ENCODE measurements at regions of chr1 and their contacts with region 1.

Region 1: GRCh38 chr1:241531195-241532161 is 700 bp upstream of the KMO start:
- DNase-seq: peak; percentile 66
- ATAC-seq: peak; percentile 89
- H3K4me3 ChIP-seq: peak overlapping the region; percentile 67
- H3K27ac ChIP-seq: peak overlapping the region; percentile 89
- H3K4me1 ChIP-seq: peaks cover 8% of the 10 kb centered on the region; the same call in 1 of the 2 replicates
- H3K27me3 ChIP-seq: no peaks in the 10 kb centered on the region
- CTCF ChIP-seq: peak; percentile 16 to 64 (median 53); a peak in 4 of 6 replicates
- EP300 ChIP-seq: peak; percentile 4 to 38; a peak in 2 of 4 replicates
- POLR2A ChIP-seq: no peak
- RAD21 ChIP-seq: peak; percentile 77

Region 2: GRCh38 chr1:241519308-241520079 is 12.0 kb before region 1 on chr1 and contains the start of gene FH:
- CTCF ChIA-PET with region 1: no interaction called
- POLR2A ChIA-PET with region 1: no interaction called
- RAD21 ChIA-PET with region 1: interaction called, 3 read pairs
- SMC1A ChIA-PET with region 1: interaction called, 7 read pairs
- in situ Hi-C with region 1: no loop called
- intact Hi-C with region 1: loop called (anchors 1 kb)
- DNase-seq: peak; percentile 89
- ATAC-seq: peak; percentile 98
- H3K4me3 ChIP-seq: peak within 1 kb of the TSS; percentile 93
- H3K27ac ChIP-seq: peak within 1 kb of the TSS; percentile 88
- H3K4me1 ChIP-seq: peaks cover 3% of the 10 kb centered on the region; the same call in 1 of the 2 replicates
- H3K27me3 ChIP-seq: no peaks in the 10 kb centered on the region
- CTCF ChIP-seq: no peak
- EP300 ChIP-seq: no peak
- POLR2A ChIP-seq: peak; percentile 96
- RAD21 ChIP-seq: no peak
- polyA plus RNA-seq, gene FH: 44.7 to 57.5 TPM

Region 3: DNA sequence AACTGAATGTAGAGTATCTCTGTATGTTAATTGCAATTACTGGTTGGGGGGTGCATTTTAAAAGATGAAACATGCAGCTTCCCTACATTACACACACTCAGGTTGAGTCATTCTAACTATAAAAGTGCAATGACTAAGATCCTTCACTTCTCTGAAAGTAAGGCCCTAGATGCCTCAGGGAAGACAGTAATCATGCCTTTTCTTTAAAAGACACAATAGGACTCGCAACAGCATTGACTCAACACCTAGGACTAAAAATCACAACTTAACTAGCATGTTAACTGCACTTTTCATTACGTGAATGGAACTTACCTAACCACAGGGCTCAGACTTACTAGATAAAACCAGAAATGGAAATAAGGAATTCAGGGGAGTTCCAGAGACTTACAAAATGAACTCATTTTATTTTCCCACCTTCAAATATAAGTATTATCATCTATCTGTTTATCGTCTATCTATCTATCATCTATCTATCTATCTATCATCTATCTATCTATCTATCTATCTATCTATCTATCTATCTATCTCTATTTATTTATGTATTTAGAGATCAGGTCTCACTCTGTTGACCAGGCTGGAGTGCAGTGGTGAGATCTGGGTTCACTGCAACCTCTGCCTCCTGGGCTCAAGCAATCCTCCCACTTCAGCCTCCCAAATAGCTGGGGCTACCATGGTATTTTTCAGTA is 60.9 kb after region 1 on chr1:
- CTCF ChIA-PET with region 1: no interaction called
- POLR2A ChIA-PET with region 1: no interaction called
- RAD21 ChIA-PET with region 1: no interaction called
- SMC1A ChIA-PET with region 1: no interaction called
- in situ Hi-C with region 1: no loop called
- intact Hi-C with region 1: no loop called
- DNase-seq: peak; percentile 13
- ATAC-seq: peak; percentile 66
- H3K4me3 ChIP-seq: no peak overlapping the region
- H3K27ac ChIP-seq: no peak overlapping the region; the same call in 1 of the 2 replicates
- H3K4me1 ChIP-seq: no peaks in the 10 kb centered on the region
- H3K27me3 ChIP-seq: no peaks in the 10 kb centered on the region
- CTCF ChIP-seq: no peak
- EP300 ChIP-seq: no peak
- POLR2A ChIP-seq: no peak
- RAD21 ChIP-seq: no peak

Region 4: DNA sequence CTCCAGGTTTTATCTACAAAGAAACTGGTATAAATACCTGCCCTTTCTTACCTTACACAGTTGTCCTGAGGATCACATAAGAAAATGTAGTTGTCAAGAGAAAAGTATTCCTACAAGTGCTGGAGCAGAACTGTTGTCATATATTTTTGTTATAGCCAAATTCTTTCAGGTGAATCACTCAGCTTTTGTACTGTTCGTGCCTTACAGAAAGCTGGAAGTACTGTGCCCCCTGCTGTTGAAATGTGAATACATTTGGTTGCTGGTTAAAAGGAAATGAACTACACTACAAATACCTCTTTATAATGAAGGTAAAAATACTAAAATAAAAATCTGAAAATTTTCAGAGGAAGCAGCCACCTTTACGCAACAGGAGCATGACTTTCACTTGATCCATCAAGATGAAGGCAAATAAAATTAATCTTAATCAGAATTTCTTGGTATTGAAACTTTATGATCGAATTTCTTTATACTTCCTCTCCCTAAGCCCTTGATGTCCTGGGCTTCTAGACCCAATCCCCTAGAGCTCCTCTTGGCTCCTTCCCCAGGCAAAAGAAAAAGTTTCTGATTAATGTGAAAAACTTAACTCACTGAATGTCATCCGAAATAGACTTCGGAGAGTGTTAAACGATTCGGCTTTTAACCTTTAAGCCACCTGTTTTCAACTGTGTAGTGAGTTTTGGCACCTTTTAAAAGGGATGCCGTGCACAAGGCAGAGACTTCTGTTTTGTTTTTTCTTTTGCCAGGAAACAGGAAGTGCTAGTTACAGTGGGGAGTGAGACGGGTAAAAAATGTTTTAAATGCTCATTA is 96.2 kb after region 1 on chr1:
- CTCF ChIA-PET with region 1: interaction called, 6 read pairs
- POLR2A ChIA-PET with region 1: no interaction called
- RAD21 ChIA-PET with region 1: interaction called, 3 read pairs
- SMC1A ChIA-PET with region 1: interaction called, 6 read pairs
- in situ Hi-C with region 1: loop called (anchors 5 kb)
- intact Hi-C with region 1: loop called (anchors 1 kb)
- DNase-seq: peak; percentile 35
- ATAC-seq: peak; percentile 92
- H3K4me3 ChIP-seq: peak overlapping the region; percentile 12; the same call in 1 of the 2 replicates
- H3K27ac ChIP-seq: peak overlapping the region; percentile 66
- H3K4me1 ChIP-seq: peaks cover 3% of the 10 kb centered on the region
- H3K27me3 ChIP-seq: no peaks in the 10 kb centered on the region
- CTCF ChIP-seq: peak; percentile 50 to 66 (median 64); a peak in 5 of 6 replicates
- EP300 ChIP-seq: no peak
- POLR2A ChIP-seq: no peak
- RAD21 ChIP-seq: peak; percentile 80

Region 5: DNA sequence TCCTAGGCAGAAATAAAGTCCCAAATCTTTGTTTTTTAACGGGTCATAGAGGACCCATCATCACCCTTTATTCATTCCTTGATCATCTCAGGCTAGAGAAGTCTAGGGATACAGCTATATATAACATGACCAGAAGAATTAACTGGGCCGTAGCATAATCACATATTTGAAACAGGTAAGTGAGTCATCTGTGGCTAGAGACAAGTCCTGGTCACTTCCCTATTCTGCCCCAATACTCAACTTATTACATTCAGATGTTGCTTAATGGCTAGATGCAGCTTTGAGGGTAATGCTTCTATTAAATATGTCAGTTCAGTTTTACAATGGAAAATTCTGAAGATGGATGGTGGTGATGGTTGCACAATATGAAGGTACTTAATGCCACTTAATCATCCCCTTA is 363.5 kb after region 1 on chr1:
- CTCF ChIA-PET with region 1: no interaction called
- POLR2A ChIA-PET with region 1: no interaction called
- RAD21 ChIA-PET with region 1: no interaction called
- SMC1A ChIA-PET with region 1: no interaction called
- in situ Hi-C with region 1: no loop called
- intact Hi-C with region 1: loop called (anchors 5 kb)
- DNase-seq: no peak
- ATAC-seq: peak; percentile 84
- H3K4me3 ChIP-seq: no peak overlapping the region
- H3K27ac ChIP-seq: no peak overlapping the region
- H3K4me1 ChIP-seq: peaks cover 3% of the 10 kb centered on the region; the same call in 1 of the 2 replicates
- H3K27me3 ChIP-seq: no peaks in the 10 kb centered on the region
- CTCF ChIP-seq: no peak
- EP300 ChIP-seq: no peak
- POLR2A ChIP-seq: no peak
- RAD21 ChIP-seq: no peak

Region 6: GRCh38 chr1:242017584-242018233 is 486.2 kb after region 1 on chr1:
- CTCF ChIA-PET with region 1: interaction called, 3 read pairs
- POLR2A ChIA-PET with region 1: no interaction called
- RAD21 ChIA-PET with region 1: no interaction called
- SMC1A ChIA-PET with region 1: no interaction called
- in situ Hi-C with region 1: no loop called
- intact Hi-C with region 1: loop called (anchors 2 kb)
- DNase-seq: no peak
- ATAC-seq: peak; percentile 93
- H3K4me3 ChIP-seq: no peak overlapping the region
- H3K27ac ChIP-seq: no peak overlapping the region
- H3K4me1 ChIP-seq: no peaks in the 10 kb centered on the region
- H3K27me3 ChIP-seq: no peaks in the 10 kb centered on the region
- CTCF ChIP-seq: peak; percentile 54 to 70 (median 61)
- EP300 ChIP-seq: no peak
- POLR2A ChIP-seq: no peak
- RAD21 ChIP-seq: peak; percentile 55

Measured in GM12878 (cell line).